ENCODE measurements at regions of chr12 and their contacts with region 1.

Region 1: GRCh38 chr12:49567611-49568441 is at the start of gene MCRS1:
- DNase-seq: peak; percentile 74 to 96 (median 91)
- ATAC-seq: peak; percentile 85
- H3K4me3 ChIP-seq: peak within 1 kb of the TSS; percentile 80 to 89
- H3K4me3 Mint-ChIP-seq: peak within 1 kb of the TSS; percentile 99
- H3K27ac ChIP-seq: peak within 1 kb of the TSS; percentile 93 to 98
- H3K27ac Mint-ChIP-seq: peak within 1 kb of the TSS; percentile 100
- H3K4me1 ChIP-seq: peaks cover 59% of the 10 kb centered on the region
- H3K4me1 Mint-ChIP-seq: peaks cover 63% of the 10 kb centered on the region
- H3K27me3 ChIP-seq: no peaks in the 10 kb centered on the region
- H3K27me3 Mint-ChIP-seq: no peaks in the 10 kb centered on the region
- CTCF ChIP-seq: no peak
- total RNA-seq, gene MCRS1: 63.7 to 70.9 TPM

Region 2: DNA sequence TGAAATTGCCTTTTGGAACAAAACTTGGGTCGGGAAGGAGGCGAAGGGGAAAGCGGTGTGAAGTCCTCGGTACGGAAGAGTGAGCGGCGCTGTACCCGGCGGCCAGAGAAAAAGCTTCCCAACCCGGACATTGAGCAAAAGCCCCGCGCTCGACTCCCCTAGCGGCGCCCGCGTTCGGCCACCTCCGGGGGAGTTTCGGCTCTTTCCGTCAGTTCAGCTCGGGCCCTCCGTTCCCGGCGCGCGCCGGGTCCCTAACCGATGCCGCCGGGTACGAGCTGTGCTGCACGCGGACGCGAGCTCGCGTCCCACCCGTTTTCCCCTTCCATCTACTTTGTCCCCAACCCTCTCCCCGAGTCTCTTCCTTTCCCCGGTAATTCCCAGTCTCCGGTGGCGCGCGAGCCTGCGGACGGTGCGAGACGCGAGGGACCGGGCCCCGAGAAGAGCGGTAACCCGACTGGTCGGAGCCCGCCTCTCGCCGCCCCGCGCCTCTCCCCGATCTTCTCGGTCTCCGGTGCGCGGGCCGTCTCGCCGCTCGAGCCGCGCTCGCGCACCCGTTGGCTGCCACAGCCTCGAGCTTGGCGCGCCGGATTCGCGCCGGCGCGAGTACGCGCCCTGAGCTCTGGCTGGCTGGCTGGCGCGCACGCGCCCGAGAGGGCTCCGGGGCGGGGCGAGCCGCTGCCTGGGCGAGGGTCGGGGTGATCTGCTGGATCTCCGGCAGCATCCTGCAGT is 201.0 kb before region 1 on chr12:
- CTCF ChIA-PET with region 1: interaction called, 4 read pairs
- POLR2A ChIA-PET with region 1: interaction called, 4 read pairs
- intact Hi-C with region 1: loop called in 1 of 2 experiments (anchors 1 kb)
- DNase-seq: peak; percentile 74 to 91 (median 84)
- ATAC-seq: peak; percentile 83
- H3K4me3 ChIP-seq: peak overlapping the region; percentile 91 to 100
- H3K4me3 Mint-ChIP-seq: peak overlapping the region; percentile 96
- H3K27ac ChIP-seq: peak overlapping the region; percentile 79 to 85
- H3K27ac Mint-ChIP-seq: peak overlapping the region; percentile 91
- H3K4me1 ChIP-seq: peaks cover 16% of the 10 kb centered on the region
- H3K4me1 Mint-ChIP-seq: peaks cover 31% of the 10 kb centered on the region
- H3K27me3 ChIP-seq: no peaks in the 10 kb centered on the region
- H3K27me3 Mint-ChIP-seq: no peaks in the 10 kb centered on the region
- CTCF ChIP-seq: no peak

Region 3: GRCh38 chr12:49538510-49539403 is 29.1 kb before region 1 on chr12 and contains the start of gene KCNH3:
- CTCF ChIA-PET with region 1: interaction called, 4 read pairs
- POLR2A ChIA-PET with region 1: interaction called, 7 read pairs
- intact Hi-C with region 1: loop called (anchors 1 kb)
- DNase-seq: peak; percentile 79 to 95 (median 91)
- ATAC-seq: peak; percentile 90
- H3K4me3 ChIP-seq: peak within 1 kb of the TSS; percentile 49 to 76
- H3K4me3 Mint-ChIP-seq: peak within 1 kb of the TSS; percentile 80
- H3K27ac ChIP-seq: no peak within 1 kb of the TSS
- H3K27ac Mint-ChIP-seq: no peak within 1 kb of the TSS
- H3K4me1 ChIP-seq: peaks cover 23% of the 10 kb centered on the region
- H3K4me1 Mint-ChIP-seq: peaks cover 33% of the 10 kb centered on the region
- H3K27me3 ChIP-seq: peaks cover 0 to 6% of the 10 kb centered on the region in 2 experiments
- H3K27me3 Mint-ChIP-seq: no peaks in the 10 kb centered on the region
- CTCF ChIP-seq: no peak
- total RNA-seq, gene KCNH3: 3.1 to 3.5 TPM

Region 4: DNA sequence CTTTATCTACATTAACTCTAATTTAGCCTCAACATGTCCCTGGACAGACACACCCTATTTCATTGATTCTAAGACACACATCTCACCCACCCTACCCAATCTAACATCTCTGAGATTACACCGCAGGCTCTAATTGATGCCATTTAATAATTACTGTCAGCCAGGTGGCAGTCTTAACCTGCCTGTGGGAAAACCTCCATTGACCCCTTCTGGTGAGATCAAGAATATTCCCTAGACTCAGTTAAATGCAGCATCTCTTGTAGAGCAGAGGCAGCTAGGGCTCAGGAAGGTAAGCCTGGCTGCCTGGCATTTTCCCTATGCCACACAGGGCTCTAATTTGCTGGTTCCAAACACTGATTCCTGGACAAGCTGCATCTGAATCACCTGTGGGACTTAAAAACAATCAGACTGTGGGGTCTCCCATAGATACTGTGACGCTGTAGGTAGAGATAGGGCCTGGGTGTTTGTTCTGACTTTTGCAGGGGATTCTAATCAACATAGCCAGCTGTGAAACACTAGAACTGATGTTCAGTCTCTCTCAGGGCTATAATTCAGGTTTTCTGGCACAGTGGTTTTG is 14.2 kb before region 1 on chr12:
- CTCF ChIA-PET with region 1: interaction called, 41 read pairs
- POLR2A ChIA-PET with region 1: interaction called, 6 read pairs
- intact Hi-C with region 1: no loop called
- DNase-seq: peak in 2 of 9 experiments; percentile 60 to 70
- ATAC-seq: peak; percentile 68
- H3K4me3 ChIP-seq: no peak overlapping the region
- H3K4me3 Mint-ChIP-seq: no peak overlapping the region
- H3K27ac ChIP-seq: no peak overlapping the region
- H3K27ac Mint-ChIP-seq: peak overlapping the region; percentile 7
- H3K4me1 ChIP-seq: peaks cover 10% of the 10 kb centered on the region
- H3K4me1 Mint-ChIP-seq: peaks cover 23% of the 10 kb centered on the region
- H3K27me3 ChIP-seq: peaks cover 0 to 4% of the 10 kb centered on the region in 2 experiments
- H3K27me3 Mint-ChIP-seq: no peaks in the 10 kb centered on the region
- CTCF ChIP-seq: peak; percentile 53

Region 5: DNA sequence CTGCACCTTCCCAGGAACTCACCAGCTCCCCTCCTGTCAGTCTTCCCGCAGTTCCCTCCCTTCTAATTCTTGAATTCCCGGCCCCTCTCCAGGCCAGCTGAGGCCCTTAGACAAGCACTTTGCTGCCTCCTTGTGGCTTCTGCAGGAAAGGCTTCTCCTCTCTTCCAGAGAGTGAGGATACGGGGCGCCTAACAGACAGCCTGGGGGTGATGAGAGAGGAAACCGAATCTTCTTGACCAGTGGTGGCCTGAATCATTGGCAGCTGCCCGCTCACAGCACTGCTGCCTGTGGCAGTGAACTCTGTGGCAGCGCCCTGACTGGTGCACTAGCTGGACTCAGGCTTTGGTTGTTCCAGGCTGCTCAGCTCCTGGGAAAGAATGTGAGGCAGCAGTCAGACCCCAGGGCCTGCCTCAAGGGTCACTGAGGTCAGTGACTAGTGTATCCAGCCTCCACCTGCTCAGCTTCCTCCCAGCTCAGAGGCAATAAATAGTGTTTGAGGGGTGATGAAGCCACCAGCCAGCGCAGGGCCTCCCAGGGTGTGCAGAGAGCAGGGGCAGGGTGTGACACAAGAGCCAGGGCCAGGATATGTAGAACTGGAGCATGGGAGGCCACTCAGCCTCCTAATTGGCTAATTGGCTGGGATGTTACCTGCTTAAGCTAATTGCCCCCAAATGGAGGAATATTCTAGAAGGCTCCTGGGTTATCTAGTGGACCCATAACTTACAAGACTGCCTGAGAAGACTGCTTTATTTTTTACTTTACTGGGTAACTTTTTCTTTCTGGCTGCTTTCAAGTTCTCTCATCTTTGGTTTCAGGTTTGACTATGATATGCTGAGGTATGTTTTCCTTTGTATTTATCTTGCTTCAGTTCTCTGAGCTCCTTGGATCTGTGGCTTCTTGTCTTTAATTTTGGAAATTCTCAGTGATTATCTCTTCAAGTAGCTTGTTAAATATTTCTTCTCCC is 13.0 kb after region 1 on chr12:
- CTCF ChIA-PET with region 1: interaction called, 13 read pairs
- POLR2A ChIA-PET with region 1: interaction called, 3 read pairs
- intact Hi-C with region 1: no loop called
- DNase-seq: peak in 8 of 9 experiments; percentile 43 to 69 (median 61)
- ATAC-seq: peak; percentile 86
- H3K4me3 ChIP-seq: no peak overlapping the region
- H3K4me3 Mint-ChIP-seq: no peak overlapping the region
- H3K27ac ChIP-seq: no peak overlapping the region
- H3K27ac Mint-ChIP-seq: no peak overlapping the region
- H3K4me1 ChIP-seq: no peaks in the 10 kb centered on the region
- H3K4me1 Mint-ChIP-seq: peaks cover 11% of the 10 kb centered on the region
- H3K27me3 ChIP-seq: no peaks in the 10 kb centered on the region
- H3K27me3 Mint-ChIP-seq: no peaks in the 10 kb centered on the region
- CTCF ChIP-seq: peak; percentile 69

Region 6: GRCh38 chr12:49828133-49829091 is 260.6 kb after region 1 on chr12 and contains the start of gene NCKAP5L:
- CTCF ChIA-PET with region 1: no interaction called
- POLR2A ChIA-PET with region 1: no interaction called
- intact Hi-C with region 1: loop called in 1 of 2 experiments (anchors 2 kb)
- DNase-seq: peak; percentile 86 to 96 (median 94)
- ATAC-seq: peak; percentile 97
- H3K4me3 ChIP-seq: peak within 1 kb of the TSS; percentile 68 to 91
- H3K4me3 Mint-ChIP-seq: peak within 1 kb of the TSS; percentile 97
- H3K27ac ChIP-seq: peak within 1 kb of the TSS; percentile 65 to 69
- H3K27ac Mint-ChIP-seq: peak within 1 kb of the TSS; percentile 97
- H3K4me1 ChIP-seq: peaks cover 15% of the 10 kb centered on the region
- H3K4me1 Mint-ChIP-seq: peaks cover 39% of the 10 kb centered on the region
- H3K27me3 ChIP-seq: no peaks in the 10 kb centered on the region
- H3K27me3 Mint-ChIP-seq: no peaks in the 10 kb centered on the region
- CTCF ChIP-seq: no peak
- total RNA-seq, gene NCKAP5L: 10.6 to 10.7 TPM

Measured in CD8-positive, alpha-beta T cell (primary cell).